MCF 10A (cell line): ENCODE measurements at regions of chr7 and their contacts with region 1.

Region 1: DNA sequence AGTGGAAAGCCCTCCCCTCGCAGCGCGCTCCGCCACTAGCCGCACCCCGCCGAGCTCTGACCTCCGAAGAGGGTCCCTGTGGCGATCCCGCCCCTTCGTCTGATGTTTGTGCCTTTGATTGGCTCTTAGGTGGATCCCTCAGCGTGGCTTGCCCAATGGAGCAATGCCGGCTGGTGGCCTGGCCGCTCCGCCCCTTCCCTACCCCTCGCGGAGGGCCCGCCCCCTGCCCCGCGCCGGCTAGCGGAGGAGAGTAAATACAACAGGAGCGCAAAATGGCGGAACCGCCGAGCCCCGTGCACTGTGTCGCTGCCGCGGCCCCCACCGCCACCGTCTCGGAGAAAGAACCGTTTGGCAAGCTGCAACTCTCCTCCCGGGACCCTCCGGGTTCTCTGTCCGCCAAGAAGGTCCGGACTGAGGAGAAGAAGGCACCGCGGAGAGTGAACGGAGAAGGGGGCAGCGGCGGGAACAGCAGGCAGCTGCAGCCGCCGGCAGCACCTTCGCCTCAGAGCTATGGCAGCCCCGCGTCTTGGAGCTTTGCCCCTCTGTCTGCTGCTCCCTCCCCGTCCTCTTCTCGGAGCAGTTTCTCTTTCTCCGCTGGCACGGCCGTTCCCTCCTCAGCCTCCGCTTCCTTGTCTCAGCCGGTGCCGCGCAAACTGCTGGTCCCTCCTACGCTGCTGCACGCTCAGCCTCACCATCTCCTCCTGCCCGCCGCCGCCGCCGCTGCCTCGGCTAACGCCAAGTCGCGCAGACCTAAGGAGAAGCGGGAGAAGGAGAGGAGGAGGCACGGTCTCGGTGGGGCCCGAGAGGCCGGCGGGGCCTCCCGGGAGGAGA is at the start of gene RSBN1L:
- DNase-seq: peak; percentile 98
- H3K4me3 Mint-ChIP-seq: peak within 1 kb of the TSS; percentile 98
- H3K27ac Mint-ChIP-seq: peak within 1 kb of the TSS; percentile 95
- H3K4me1 Mint-ChIP-seq: peaks cover 24% of the 10 kb centered on the region
- H3K27me3 Mint-ChIP-seq: no peaks in the 10 kb centered on the region
- CTCF ChIP-seq: no peak
- total RNA-seq, gene RSBN1L: 10.9 and 12.1 TPM in 2 replicates

Region 2: GRCh38 chr7:77657427-77658224 is 38.8 kb before region 1 on chr7:
- CTCF ChIA-PET with region 1: interaction called, 20 read pairs
- POLR2A ChIA-PET with region 1: interaction called, 22 read pairs
- intact Hi-C with region 1: no loop called
- DNase-seq: peak; percentile 65
- H3K4me3 Mint-ChIP-seq: no peak overlapping the region
- H3K27ac Mint-ChIP-seq: no peak overlapping the region
- H3K4me1 Mint-ChIP-seq: peaks cover 2% of the 10 kb centered on the region
- H3K27me3 Mint-ChIP-seq: no peaks in the 10 kb centered on the region
- CTCF ChIP-seq: peak; percentile 56

Region 3: GRCh38 chr7:77674878-77675277 is 21.5 kb before region 1 on chr7:
- CTCF ChIA-PET with region 1: interaction called, 7 read pairs
- POLR2A ChIA-PET with region 1: interaction called, 23 read pairs
- intact Hi-C with region 1: no loop called
- DNase-seq: peak; percentile 93
- H3K4me3 Mint-ChIP-seq: no peak overlapping the region
- H3K27ac Mint-ChIP-seq: no peak overlapping the region
- H3K4me1 Mint-ChIP-seq: peaks cover 9% of the 10 kb centered on the region
- H3K27me3 Mint-ChIP-seq: no peaks in the 10 kb centered on the region
- CTCF ChIP-seq: no peak

Region 4: GRCh38 chr7:77684030-77684429 is 12.4 kb before region 1 on chr7:
- CTCF ChIA-PET with region 1: interaction called, 13 read pairs
- POLR2A ChIA-PET with region 1: interaction called, 73 read pairs
- intact Hi-C with region 1: no loop called
- DNase-seq: peak; percentile 45
- H3K4me3 Mint-ChIP-seq: no peak overlapping the region
- H3K27ac Mint-ChIP-seq: no peak overlapping the region
- H3K4me1 Mint-ChIP-seq: peaks cover 23% of the 10 kb centered on the region
- H3K27me3 Mint-ChIP-seq: no peaks in the 10 kb centered on the region
- CTCF ChIP-seq: no peak

Region 5: GRCh38 chr7:77714195-77714594 is 17.8 kb after region 1 on chr7:
- CTCF ChIA-PET with region 1: interaction called, 4 read pairs
- POLR2A ChIA-PET with region 1: interaction called, 150 read pairs
- intact Hi-C with region 1: no loop called
- DNase-seq: no peak
- H3K4me3 Mint-ChIP-seq: no peak overlapping the region
- H3K27ac Mint-ChIP-seq: no peak overlapping the region
- H3K4me1 Mint-ChIP-seq: peaks cover 15% of the 10 kb centered on the region
- H3K27me3 Mint-ChIP-seq: no peaks in the 10 kb centered on the region
- CTCF ChIP-seq: no peak

Region 6: DNA sequence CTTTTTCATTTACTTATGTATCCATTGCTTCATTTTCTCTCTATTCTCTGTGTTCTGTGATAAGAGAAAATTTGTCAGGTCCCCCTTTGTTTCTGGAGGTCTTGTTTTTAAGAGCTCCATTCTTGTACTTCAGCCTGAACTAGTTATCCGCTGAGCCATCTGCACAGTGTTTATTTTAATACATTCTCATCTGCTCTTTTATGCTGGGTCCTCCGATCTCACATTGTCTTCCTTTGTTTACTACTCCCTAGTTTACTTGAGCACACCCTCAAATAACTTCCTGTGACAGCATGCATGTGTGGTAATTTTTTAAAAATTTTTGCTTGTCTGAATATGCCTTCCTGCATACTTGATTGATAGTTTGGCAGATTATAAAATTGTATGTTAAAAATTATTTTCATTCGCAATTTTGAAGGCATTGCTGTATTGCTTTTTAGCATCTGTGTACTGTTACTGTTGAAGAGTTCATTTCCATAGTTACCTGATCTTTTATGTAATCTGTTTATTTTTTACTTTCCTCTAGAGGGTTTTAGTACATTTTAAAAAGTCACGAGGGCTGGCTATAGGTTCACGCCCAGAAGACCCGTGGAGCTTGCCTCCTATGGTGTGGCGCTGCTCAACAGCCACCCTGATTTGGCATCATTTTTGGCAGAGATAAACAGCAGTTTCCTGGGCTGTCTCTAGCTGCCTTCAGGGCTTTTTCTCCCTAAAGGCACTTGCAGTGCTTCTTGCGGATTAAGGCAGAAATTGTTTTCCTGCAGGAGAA is 31.7 kb after region 1 on chr7:
- CTCF ChIA-PET with region 1: interaction called, 3 read pairs
- POLR2A ChIA-PET with region 1: interaction called, 150 read pairs
- intact Hi-C with region 1: no loop called
- DNase-seq: peak; percentile 61
- H3K4me3 Mint-ChIP-seq: peak overlapping the region; percentile 3
- H3K27ac Mint-ChIP-seq: peak overlapping the region; percentile 78
- H3K4me1 Mint-ChIP-seq: peaks cover 26% of the 10 kb centered on the region
- H3K27me3 Mint-ChIP-seq: no peaks in the 10 kb centered on the region
- CTCF ChIP-seq: no peak